HEK293 (cell line): ENCODE measurements at regions of chr11 and their contacts with region 1.

Region 1: GRCh38 chr11:95089620-95090542 is at the start of gene ENDOD1:
- H3K4me3 ChIP-seq: peak within 1 kb of the TSS; percentile 55
- H3K27ac ChIP-seq: peak within 1 kb of the TSS; percentile 21; the same call in 1 of the 2 replicates
- H3K4me1 ChIP-seq: no peaks in the 10 kb centered on the region
- CTCF ChIP-seq: peak; percentile 72

Region 2: GRCh38 chr11:95102733-95103132 is 12.9 kb after region 1 on chr11:
- CTCF ChIA-PET with region 1: interaction called, 27 read pairs
- POLR2A ChIA-PET with region 1: interaction called, 26 read pairs
- H3K4me3 ChIP-seq: no peak overlapping the region
- H3K27ac ChIP-seq: no peak overlapping the region
- H3K4me1 ChIP-seq: 0 out of 2 replicates have a peak, but pooled peaks cover 6% of the 10 kb centered on the region
- CTCF ChIP-seq: no peak

Region 3: DNA sequence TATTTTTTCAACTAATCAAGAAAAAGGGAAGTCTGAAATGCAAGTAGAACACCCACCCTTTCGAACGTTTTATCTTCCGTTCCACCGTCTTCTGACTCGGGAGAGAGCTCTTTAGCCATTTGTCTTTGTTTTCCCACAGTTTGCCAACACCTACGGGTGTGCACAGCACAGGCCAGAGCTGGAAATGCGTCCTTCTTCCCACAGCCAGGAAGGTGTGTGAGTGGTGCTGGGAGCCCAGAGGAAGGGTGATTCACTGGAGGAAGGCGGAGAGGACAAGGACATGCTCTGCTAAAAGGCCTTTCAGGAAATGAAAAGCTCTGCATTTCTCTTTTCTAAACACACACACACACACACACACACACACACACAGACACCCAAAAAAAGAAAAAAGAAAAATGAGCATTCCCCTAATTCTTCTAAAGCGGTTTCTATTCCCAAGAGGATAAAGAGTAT is 18.3 kb after region 1 on chr11:
- CTCF ChIA-PET with region 1: interaction called, 27 read pairs
- POLR2A ChIA-PET with region 1: interaction called, 26 read pairs
- H3K4me3 ChIP-seq: no peak overlapping the region
- H3K27ac ChIP-seq: peak overlapping the region; percentile 59; the same call in 1 of the 2 replicates
- H3K4me1 ChIP-seq: peaks cover 20% of the 10 kb centered on the region
- CTCF ChIP-seq: no peak